AG04450 (cell line): ENCODE measurements at regions of chr1 and their contacts with region 1.

Region 1: GRCh38 chr1:8061210-8061609 is 35.1 kb upstream of the ERRFI1 start:
- DNase-seq: peak; percentile 87
- H3K4me3 ChIP-seq: no peak overlapping the region
- H3K27ac ChIP-seq: peak overlapping the region; percentile 89
- H3K27me3 ChIP-seq: no peaks in the 10 kb centered on the region
- CTCF ChIP-seq: no peak

Region 2: DNA sequence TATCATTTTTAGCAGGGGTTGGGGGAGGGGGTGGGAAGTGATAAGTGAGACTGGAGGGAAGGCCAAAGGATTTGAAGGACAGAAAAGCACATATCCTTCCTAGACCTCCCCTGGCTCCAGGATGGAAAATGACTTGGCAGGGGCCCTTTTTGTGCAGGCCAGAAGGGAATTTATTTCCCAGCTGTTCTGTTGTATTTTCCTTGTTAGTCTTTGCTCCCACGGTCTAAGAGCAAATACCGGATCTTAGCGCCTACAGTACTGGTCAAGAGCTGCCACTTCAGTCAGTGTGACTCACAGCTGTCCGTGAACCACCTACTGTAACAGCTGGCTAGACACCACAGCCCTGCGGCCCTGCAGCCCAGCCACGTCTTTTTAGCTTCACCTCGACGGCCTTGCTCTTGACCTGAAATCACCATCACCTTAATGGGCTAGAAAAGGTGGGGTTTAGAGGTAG is 15.9 kb after region 1 on chr1:
- CTCF ChIA-PET with region 1: interaction called, 4 read pairs
- POLR2A ChIA-PET with region 1: interaction called, 10 read pairs
- DNase-seq: no peak
- H3K4me3 ChIP-seq: no peak overlapping the region
- H3K27ac ChIP-seq: peak overlapping the region; percentile 62
- H3K27me3 ChIP-seq: no peaks in the 10 kb centered on the region
- CTCF ChIP-seq: no peak

Region 3: DNA sequence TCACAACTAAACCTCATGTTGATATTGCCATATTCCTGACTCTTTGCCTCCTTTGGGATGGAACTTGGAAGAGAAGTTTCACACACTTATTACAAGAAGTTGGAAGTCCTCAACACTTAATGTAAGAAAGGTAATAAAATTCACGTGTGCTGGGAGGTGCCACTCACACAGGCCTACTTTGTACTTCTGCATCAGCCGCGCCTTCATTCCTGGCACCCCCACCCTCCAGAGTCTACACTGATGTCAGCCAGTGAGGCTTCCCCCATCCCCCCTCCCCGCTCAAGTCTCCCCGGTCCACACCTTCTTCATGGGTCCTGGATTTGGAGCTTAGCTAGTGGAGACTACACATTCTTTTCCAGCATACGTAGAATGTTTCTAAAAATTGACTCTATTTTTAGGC is 231.9 kb after region 1 on chr1:
- CTCF ChIA-PET with region 1: no interaction called
- POLR2A ChIA-PET with region 1: no interaction called
- DNase-seq: no peak
- H3K4me3 ChIP-seq: no peak overlapping the region
- H3K27ac ChIP-seq: no peak overlapping the region
- H3K27me3 ChIP-seq: no peaks in the 10 kb centered on the region
- CTCF ChIP-seq: no peak